ENCODE measurements at regions of chr4 and their contacts with region 1.

Region 1: DNA sequence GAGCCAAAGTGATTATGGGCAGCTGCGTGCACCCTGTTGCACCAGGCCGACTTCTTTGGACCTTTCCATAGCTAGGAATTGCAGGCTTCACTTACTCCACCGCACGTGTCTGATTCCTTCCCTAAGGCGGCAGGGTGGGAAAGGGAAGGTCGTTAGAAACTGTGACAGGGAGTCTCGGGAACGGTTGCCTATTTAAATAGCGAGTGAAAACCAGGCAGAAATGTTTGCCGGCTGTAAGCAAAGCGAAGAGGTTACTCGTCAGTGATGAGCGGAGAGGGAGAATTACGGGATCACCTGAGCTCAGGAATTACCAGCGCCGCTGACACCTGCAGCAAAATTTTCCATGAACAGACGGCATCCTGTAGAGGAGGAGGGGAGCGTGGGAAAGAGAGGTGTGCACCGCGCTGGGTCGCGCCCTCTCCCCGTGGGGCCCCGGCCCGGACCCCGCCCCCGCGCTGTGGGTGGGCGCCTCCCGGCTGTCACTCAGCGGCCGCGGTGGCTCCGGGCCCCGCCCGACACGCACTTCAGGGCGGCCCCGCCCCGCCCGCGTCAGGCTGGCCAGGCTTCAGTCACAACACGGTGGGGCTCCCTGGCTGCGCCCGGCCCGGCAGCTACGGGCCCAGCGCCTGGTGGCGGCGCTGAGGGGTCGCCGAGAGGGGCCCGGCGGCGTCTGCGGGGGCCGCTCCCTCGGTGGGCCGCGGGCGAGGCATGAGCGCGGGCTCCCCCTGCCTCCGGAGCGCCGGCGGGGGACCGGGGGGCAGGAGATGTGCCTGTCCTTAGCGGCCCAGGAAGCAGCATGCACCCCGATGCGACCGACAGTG is at the start of gene SNX25:
- DNase-seq: peak; percentile 65
- ATAC-seq: peak; percentile 88
- H3K4me3 ChIP-seq: peak within 1 kb of the TSS; percentile 93
- H3K27ac ChIP-seq: peak within 1 kb of the TSS; percentile 73
- H3K4me1 ChIP-seq: peaks cover 8% of the 10 kb centered on the region
- H3K27me3 ChIP-seq: no peaks in the 10 kb centered on the region
- CTCF ChIP-seq: peak; percentile 23; the same call in 1 of the 2 replicates
- POLR2A ChIP-seq: peak; percentile 78
- RAD21 ChIP-seq: peak; percentile 29
- total RNA-seq, gene SNX25: 28.3 and 30.0 TPM in 2 replicates

Region 2: GRCh38 chr4:185359767-185360446 is 150.7 kb after region 1 on chr4:
- CTCF ChIA-PET with region 1: no interaction called
- POLR2A ChIA-PET with region 1: no interaction called
- dilution Hi-C with region 1: no loop called
- in situ Hi-C with region 1: no loop called
- intact Hi-C with region 1: loop called (anchors 10 kb)
- DNase-seq: peak; percentile 80
- ATAC-seq: no peak; the same call in 1 of the 2 replicates
- H3K4me3 ChIP-seq: no peak overlapping the region
- H3K27ac ChIP-seq: no peak overlapping the region
- H3K4me1 ChIP-seq: peaks cover 5% of the 10 kb centered on the region
- H3K27me3 ChIP-seq: no peaks in the 10 kb centered on the region
- CTCF ChIP-seq: no peak
- POLR2A ChIP-seq: no peak
- RAD21 ChIP-seq: no peak